ENCODE measurements at regions of chr21 and their contacts with region 1.

Region 1: GRCh38 chr21:43771698-43772424 is 4.2 kb downstream of the CSTB start:
- DNase-seq: peak; percentile 93
- H3K4me3 ChIP-seq: no peak overlapping the region
- H3K27ac ChIP-seq: peak overlapping the region; percentile 49
- H3K4me1 ChIP-seq: peaks cover 27% of the 10 kb centered on the region
- H3K27me3 ChIP-seq: no peaks in the 10 kb centered on the region
- CTCF ChIP-seq: no peak

Region 2: DNA sequence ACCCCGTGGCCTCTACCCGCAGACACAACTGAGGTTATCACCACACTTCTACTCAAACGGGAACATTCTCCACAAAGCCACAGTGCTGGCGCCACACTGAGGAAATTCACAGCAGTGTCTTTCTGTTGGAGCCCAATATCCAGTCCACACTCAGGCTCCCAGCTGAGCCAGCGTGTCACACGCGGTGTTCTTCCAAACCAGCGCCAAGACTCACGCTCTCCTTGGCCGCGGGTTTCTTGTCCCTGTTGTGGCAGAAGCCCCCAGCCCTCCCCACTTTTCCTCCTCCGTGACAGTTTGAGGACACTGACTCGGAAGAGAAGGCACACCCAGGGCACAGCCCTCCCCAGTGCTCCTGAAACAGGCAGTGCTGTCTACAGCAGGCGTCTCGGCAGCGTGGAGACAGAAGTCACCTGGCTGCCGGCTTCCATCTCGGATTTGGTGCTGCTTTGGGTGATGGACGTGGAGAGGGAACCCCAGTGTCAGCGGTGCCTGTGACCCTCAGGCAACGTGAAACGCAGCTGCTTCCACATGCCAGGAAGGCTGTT is 57.8 kb after region 1 on chr21:
- CTCF ChIA-PET with region 1: no interaction called
- POLR2A ChIA-PET with region 1: no interaction called
- intact Hi-C with region 1: no loop called
- DNase-seq: peak; percentile 58
- H3K4me3 ChIP-seq: no peak overlapping the region
- H3K27ac ChIP-seq: no peak overlapping the region
- H3K4me1 ChIP-seq: no peaks in the 10 kb centered on the region
- H3K27me3 ChIP-seq: no peaks in the 10 kb centered on the region
- CTCF ChIP-seq: peak; percentile 51

Region 3: DNA sequence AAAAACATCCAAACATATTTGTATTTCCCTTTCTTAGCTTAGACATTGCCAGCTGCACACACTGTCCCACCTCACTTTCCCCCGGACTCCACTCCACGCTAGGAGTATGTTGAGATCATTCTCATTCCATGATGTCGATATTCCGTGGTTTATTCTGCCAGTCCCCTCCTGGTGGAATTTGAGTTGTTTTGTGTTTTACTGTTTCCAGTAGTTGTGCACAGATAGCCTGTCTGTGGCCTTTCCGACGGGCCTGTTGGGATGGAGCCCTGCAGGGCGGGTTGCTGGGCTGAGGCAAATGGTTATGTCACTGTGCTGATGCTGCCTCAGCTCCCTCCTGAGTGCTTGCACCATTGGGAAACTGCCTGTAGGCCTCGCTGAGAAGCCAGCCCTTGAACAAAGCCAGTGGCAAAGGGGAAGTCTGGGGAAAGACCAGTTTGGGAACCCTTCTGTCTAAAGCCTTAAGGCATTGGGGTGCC is 253.1 kb after region 1 on chr21:
- CTCF ChIA-PET with region 1: no interaction called
- POLR2A ChIA-PET with region 1: interaction called, 11 read pairs
- intact Hi-C with region 1: no loop called
- DNase-seq: no peak
- H3K4me3 ChIP-seq: no peak overlapping the region
- H3K27ac ChIP-seq: peak overlapping the region; percentile 81
- H3K4me1 ChIP-seq: peaks cover 55% of the 10 kb centered on the region
- H3K27me3 ChIP-seq: no peaks in the 10 kb centered on the region
- CTCF ChIP-seq: no peak

Measured in A673 (cell line).